ENCODE measurements at regions of chr6 and their contacts with region 1.

Region 1: DNA sequence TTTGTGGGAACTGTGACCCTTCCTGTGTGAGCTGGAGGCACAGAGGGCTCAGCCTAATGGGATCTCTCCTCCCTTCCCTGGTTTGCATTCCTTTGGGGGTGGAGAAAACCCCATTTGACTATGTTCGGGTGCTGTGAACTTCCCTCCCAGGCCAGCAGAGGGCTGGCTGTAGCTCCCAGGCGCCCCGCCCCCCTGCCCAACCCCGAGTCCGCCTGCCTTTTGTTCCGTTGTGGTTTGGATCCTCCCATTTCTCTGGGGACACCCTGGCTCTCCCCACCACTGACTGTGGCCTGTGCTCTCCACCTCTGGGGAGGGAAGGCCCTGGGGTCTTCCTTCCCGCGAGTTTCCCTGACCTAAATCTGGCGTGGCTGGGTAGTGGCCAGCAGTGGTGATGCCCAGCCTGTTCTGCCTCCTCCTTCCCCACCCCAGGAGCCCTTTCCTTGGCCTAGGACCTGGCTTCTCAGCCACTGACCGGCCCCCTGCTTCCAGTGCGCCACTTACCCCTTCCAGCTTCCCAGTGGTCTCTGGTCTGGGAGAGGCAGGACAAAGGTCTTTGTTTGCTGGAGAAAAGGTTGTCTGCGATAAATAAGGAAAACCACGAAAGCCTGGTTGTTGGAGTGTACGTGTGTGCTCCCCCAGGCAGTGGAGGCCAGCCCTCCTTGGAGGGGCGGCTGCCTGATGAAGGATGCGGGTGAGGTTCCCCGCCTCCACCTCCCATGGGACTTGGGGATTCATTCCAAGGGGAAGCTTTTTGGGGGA is 4.9 kb downstream of the VEGFA start:
- DNase-seq: peak; percentile 79
- H3K4me3 Mint-ChIP-seq: peak overlapping the region; percentile 38
- H3K27ac Mint-ChIP-seq: peak overlapping the region; percentile 74
- H3K4me1 Mint-ChIP-seq: peaks cover 49% of the 10 kb centered on the region
- H3K27me3 Mint-ChIP-seq: peaks cover 7% of the 10 kb centered on the region

Region 2: DNA sequence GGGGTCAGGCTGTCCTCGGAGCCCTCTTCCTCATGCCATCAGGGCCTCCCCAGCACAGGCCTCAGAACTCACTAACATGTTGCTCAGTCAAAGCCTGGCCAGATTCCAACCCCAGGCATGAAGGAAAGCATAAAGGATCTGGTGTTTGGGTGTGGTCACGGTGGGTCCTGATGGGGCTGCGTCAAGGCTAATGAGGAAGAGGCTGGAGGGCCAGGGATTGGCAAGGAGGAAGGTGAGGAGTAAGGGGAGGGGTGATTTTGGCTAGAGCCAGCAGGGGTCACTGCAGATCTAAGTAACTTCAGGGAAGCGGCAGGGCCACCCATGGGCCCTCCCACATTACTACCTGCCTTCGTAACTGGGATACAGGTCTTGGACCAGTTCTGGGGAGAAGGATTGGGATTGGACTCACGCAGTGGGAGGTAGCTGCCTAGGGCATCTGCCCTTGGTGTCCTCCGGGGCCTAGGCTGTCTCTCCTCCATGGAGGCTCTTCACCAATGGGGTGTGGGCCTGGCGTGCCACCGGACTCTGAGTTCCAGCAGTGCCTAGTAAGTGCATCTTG is 51.1 kb before region 1 on chr6:
- CTCF ChIA-PET with region 1: interaction called, 28 read pairs
- DNase-seq: peak; percentile 84
- H3K4me3 Mint-ChIP-seq: no peak overlapping the region
- H3K27ac Mint-ChIP-seq: no peak overlapping the region
- H3K4me1 Mint-ChIP-seq: peaks cover 30% of the 10 kb centered on the region
- H3K27me3 Mint-ChIP-seq: peaks cover 26% of the 10 kb centered on the region

Region 3: GRCh38 chr6:43790025-43790523 is 15.1 kb after region 1 on chr6:
- CTCF ChIA-PET with region 1: interaction called, 13 read pairs
- DNase-seq: no peak
- H3K4me3 Mint-ChIP-seq: no peak overlapping the region
- H3K27ac Mint-ChIP-seq: no peak overlapping the region
- H3K4me1 Mint-ChIP-seq: no peaks in the 10 kb centered on the region
- H3K27me3 Mint-ChIP-seq: peaks cover 17% of the 10 kb centered on the region

Region 4: GRCh38 chr6:43796903-43797888 is 22.2 kb after region 1 on chr6:
- CTCF ChIA-PET with region 1: interaction called, 12 read pairs
- DNase-seq: no peak
- H3K4me3 Mint-ChIP-seq: no peak overlapping the region
- H3K27ac Mint-ChIP-seq: peak overlapping the region; percentile 15
- H3K4me1 Mint-ChIP-seq: peaks cover 23% of the 10 kb centered on the region
- H3K27me3 Mint-ChIP-seq: peaks cover 22% of the 10 kb centered on the region

Region 5: DNA sequence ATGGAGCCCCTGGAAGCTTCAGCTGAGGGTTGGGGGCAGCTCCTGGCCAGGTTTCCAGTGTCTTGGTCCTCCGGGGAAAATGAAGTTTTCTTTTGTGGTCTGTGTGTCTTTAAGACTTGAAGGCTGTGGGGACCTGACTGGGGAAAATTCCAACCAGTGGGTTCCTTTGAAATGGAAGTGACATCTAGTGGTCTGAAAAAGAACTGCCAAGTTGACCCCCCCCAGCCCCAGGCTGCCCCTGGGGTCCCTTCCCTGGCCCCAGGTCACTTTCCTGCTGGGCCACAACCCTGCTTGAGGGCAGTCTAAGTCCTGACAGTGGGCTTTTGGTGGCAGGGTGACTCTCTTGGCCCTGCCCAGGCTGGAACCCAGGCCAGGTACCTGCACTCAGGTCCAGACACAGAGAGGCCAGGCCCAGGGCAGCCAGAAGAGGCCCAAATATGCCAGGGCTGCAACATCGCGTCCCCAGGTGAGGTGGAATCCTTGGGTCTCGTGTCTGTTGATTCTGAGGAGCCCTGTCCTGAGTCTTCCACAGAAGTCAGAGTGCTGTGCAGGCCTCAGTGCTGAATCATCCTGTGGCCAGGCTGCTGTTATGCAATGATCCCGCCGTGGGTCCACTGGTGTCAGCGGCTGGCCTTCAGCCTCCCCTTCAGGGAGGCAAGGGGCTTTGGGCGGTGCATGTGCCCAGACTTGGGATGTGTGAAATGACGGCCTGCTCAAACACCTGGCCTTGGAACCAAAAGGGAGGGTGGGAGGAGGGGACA is 63.5 kb after region 1 on chr6:
- CTCF ChIA-PET with region 1: no interaction called
- DNase-seq: no peak
- H3K4me3 Mint-ChIP-seq: no peak overlapping the region
- H3K27ac Mint-ChIP-seq: no peak overlapping the region
- H3K4me1 Mint-ChIP-seq: no peaks in the 10 kb centered on the region
- H3K27me3 Mint-ChIP-seq: peaks cover 13% of the 10 kb centered on the region

Region 6: DNA sequence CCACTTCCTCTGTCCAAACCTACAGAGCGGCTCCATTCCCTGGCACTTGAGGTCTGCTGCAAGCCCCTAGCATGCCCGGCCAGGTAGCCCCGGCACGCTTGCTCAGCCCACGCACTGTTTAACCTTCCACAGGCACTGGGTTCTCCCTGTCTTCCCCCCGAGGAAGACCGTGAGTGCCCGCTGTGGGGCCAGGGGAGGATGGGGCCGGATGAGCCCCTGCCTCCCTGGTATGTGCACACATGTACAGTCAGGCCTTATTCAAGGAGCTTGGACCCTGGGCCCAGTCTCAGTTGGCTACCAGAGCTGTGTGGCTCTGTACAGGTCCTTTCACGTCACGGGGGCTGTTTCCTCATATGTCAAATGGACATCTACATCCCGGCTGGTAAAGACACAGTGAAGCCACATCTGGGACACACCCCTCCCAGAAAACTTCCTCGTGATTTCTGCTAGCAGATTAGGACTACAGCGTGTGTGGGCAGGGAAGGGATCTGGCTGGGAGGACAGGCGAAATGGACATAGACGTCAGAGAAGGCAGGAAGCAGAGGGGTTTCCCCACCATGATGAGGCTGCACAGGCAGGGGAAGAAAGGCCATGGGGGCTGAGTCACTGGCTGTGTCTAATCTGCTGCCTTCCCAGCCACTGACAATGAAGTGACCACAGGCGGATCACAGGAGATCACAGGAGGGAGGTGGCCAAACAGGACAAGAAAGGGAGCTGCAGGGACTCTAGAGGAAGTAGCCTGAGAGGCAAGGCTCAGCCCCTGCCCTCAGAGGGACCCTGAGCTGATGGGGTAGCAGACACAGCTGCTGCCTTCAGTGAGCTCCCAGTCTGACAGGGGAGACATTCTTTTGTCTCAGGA is 289.4 kb after region 1 on chr6:
- CTCF ChIA-PET with region 1: interaction called, 19 read pairs
- DNase-seq: no peak
- H3K4me3 Mint-ChIP-seq: no peak overlapping the region
- H3K27ac Mint-ChIP-seq: no peak overlapping the region
- H3K4me1 Mint-ChIP-seq: no peaks in the 10 kb centered on the region
- H3K27me3 Mint-ChIP-seq: peaks cover 45% of the 10 kb centered on the region

Region 7: DNA sequence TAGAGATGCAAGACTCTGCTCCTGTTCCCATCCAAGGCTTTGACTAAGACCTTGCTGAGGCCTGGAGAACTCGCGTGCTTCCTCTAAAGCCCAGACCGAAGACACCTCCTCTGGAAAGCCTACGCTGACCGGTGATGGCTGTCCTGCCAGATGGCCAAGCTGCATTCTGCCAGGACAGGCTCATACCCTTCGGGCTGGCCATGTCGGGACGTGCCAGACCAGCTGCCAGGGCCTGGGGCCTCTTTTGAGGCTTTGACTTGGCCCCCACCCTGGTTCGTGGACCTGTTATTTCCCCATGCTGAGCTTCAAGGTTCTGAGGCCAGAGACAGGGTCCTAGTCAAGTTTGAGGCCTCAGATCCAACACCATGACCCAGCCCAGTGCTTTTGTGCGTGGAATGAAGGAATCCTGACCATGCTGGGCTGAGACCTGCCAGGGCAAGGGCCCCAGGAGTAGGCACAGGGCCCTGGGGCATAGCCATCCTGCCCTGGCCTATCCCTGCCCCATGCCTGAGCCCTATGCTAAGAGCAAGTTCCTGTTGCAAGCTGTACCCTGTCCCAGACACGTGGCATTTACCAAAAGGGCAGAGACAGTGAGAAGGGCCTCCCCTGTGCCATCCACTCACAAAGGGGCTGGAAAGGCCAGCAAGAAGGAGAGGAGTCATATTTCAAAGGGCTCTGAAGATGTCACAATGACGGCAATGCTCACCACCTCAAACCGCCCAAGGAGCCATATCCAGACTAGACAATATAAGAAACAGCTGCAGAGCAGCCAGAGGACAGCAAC is 309.5 kb after region 1 on chr6:
- CTCF ChIA-PET with region 1: interaction called, 65 read pairs
- DNase-seq: no peak
- H3K4me3 Mint-ChIP-seq: no peak overlapping the region
- H3K27ac Mint-ChIP-seq: no peak overlapping the region
- H3K4me1 Mint-ChIP-seq: peaks cover 3% of the 10 kb centered on the region
- H3K27me3 Mint-ChIP-seq: peaks cover 6% of the 10 kb centered on the region